ENCODE measurements at regions of chr2 and their contacts with region 1.

Region 1: GRCh38 chr2:28034696-28035095 is 144.2 kb downstream of the BABAM2 start:
- DNase-seq: no peak
- ATAC-seq: no peak
- H3K4me3 ChIP-seq: no peak overlapping the region
- H3K27ac ChIP-seq: no peak overlapping the region
- H3K4me1 ChIP-seq: no peaks in the 10 kb centered on the region; the same call in 1 of the 2 replicates
- H3K27me3 ChIP-seq: no peaks in the 10 kb centered on the region
- CTCF ChIP-seq: no peak
- POLR2A ChIP-seq: no peak
- RAD21 ChIP-seq: no peak

Region 2: GRCh38 chr2:27335311-27335710 is 699.4 kb before region 1 on chr2:
- CTCF ChIA-PET with region 1: no interaction called
- POLR2A ChIA-PET with region 1: no interaction called
- dilution Hi-C with region 1: no loop called
- in situ Hi-C with region 1: no loop called
- intact Hi-C with region 1: no loop called
- DNase-seq: no peak
- ATAC-seq: no peak
- H3K4me3 ChIP-seq: no peak overlapping the region
- H3K27ac ChIP-seq: no peak overlapping the region
- H3K4me1 ChIP-seq: no peaks in the 10 kb centered on the region
- H3K27me3 ChIP-seq: no peaks in the 10 kb centered on the region
- CTCF ChIP-seq: no peak
- POLR2A ChIP-seq: no peak
- RAD21 ChIP-seq: no peak

Region 3: DNA sequence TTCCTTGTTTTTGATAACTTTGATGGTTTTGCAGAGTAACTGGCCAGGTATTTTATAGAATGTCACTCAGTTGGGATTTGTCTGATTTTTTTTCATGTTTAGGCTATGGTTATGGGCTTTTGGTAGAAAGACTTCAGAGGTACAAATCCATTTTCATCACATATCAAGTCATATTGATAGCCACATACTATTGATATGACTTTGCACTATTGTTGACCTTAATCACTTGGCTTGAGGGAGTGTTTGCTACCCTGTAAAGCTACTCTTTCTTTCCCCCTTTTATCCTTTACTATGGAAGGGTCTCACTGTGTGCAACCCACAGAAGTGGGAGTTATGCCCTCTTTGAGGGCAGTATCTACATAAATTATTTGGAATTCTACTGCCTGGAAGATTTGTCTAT is 34.4 kb before region 1 on chr2:
- CTCF ChIA-PET with region 1: interaction called, 3 read pairs
- POLR2A ChIA-PET with region 1: no interaction called
- dilution Hi-C with region 1: no loop called
- in situ Hi-C with region 1: no loop called
- intact Hi-C with region 1: loop called (anchors 1 kb)
- DNase-seq: no peak
- ATAC-seq: no peak
- H3K4me3 ChIP-seq: no peak overlapping the region
- H3K27ac ChIP-seq: no peak overlapping the region
- H3K4me1 ChIP-seq: peaks cover 4% of the 10 kb centered on the region
- H3K27me3 ChIP-seq: no peaks in the 10 kb centered on the region
- CTCF ChIP-seq: no peak
- POLR2A ChIP-seq: no peak
- RAD21 ChIP-seq: no peak

Measured in IMR-90 (cell line).